Astrocyte of the cerebellum (primary cell): ENCODE measurements at regions of chr17 and their contacts with region 1.

Region 1: GRCh38 chr17:2029911-2030778 is at the start of gene DPH1:
- DNase-seq: no peak
- H3K4me3 ChIP-seq: peak within 1 kb of the TSS; percentile 100
- CTCF ChIP-seq: no peak

Region 2: GRCh38 chr17:1861391-1862010 is 168.6 kb before region 1 on chr17:
- in situ Hi-C with region 1: loop called (anchors 5 kb)
- DNase-seq: no peak
- H3K4me3 ChIP-seq: no peak overlapping the region
- CTCF ChIP-seq: no peak

Region 3: GRCh38 chr17:1915889-1916288 is 114.3 kb before region 1 on chr17:
- in situ Hi-C with region 1: loop called (anchors 5 kb)
- DNase-seq: no peak
- H3K4me3 ChIP-seq: no peak overlapping the region
- CTCF ChIP-seq: no peak

Region 4: GRCh38 chr17:2102931-2103809 is 73.0 kb after region 1 on chr17:
- in situ Hi-C with region 1: no loop called
- DNase-seq: peak; percentile 81
- H3K4me3 ChIP-seq: no peak overlapping the region
- CTCF ChIP-seq: no peak